ENCODE measurements at regions of chr1 and their contacts with region 1.

Region 1: DNA sequence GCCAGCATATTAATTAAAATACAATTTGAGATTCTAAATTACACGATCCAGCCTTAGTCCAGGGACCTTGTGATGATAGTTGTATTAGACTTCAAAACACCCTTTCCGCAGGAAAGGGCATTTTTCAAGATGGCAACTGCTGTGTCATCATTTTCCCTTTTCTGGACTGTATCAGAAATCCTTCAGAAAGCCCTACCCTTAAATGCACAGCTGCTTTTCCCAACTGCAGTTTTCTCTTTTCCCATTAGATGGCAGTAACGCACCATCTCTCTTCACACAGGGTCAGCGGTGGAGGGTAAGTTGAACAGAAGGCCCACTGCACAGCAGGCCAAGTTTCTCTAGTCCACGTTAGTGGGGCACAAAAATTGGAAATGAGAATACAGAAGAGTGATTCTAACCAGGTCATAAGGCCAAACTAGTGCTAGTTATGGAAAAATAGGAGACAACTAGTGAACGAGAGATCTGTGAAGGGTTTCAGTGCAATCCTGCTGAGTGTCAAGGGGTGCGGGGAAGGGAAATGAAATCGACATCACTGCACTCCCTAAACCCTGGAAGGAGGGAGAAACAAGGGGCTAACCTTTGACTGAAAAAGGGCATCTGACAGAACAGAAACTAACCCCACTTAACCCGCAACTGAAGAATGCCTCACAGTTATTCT is 22.1 kb upstream of the TDRD10 start:
- DNase-seq: peak; percentile 62 to 88 (median 72)
- H3K4me3 ChIP-seq: no peak overlapping the region
- H3K27ac ChIP-seq: peak overlapping the region in 2 of 5 donors; percentile 8 to 18
- H3K4me1 ChIP-seq: peaks cover 8 to 10% of the 10 kb centered on the region in 2 donors
- H3K27me3 ChIP-seq: no peaks in the 10 kb centered on the region
- CTCF ChIP-seq: peak; percentile 92 to 99 (median 98)
- POLR2A ChIP-seq: peak in 1 of 2 donors; percentile 22

Region 2: DNA sequence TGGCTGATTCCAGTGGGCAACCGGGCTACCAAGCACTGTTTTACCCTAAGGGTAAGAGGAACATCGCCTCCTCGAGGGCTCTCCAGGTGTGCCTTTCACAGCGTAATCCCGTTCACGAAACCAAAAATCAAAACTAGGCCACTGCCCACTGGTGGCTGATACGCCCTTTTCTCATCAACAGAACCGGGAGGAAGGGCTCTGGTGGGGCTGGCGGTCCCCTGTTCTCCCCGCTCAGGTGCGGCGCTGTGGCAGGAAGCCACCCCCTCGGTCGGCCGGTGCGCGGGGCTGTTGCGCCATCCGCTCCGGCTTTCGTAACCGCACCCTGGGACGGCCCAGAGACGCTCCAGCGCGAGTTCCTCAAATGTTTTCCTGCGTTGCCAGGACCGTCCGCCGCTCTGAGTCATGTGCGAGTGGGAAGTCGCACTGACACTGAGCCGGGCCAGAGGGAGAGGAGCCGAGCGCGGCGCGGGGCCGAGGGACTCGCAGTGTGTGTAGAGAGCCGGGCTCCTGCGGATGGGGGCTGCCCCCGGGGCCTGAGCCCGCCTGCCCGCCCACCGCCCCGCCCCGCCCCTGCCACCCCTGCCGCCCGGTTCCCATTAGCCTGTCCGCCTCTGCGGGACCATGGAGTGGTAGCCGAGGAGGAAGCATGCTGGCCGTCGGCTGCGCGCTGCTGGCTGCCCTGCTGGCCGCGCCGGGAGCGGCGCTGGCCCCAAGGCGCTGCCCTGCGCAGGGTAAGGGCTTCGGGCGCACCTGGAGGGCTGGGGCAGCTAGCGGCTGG is 74.7 kb before region 1 on chr1 and contains the start of gene IL6R:
- intact Hi-C with region 1: loop called in 1 of 2 experiments (anchors 10 kb)
- DNase-seq: peak; percentile 93 to 98 (median 96)
- H3K4me3 ChIP-seq: peak within 1 kb of the TSS; percentile 21 to 80 (median 68)
- H3K27ac ChIP-seq: peak within 1 kb of the TSS; percentile 92 to 99 (median 95)
- H3K4me1 ChIP-seq: peaks cover 24 to 38% of the 10 kb centered on the region in 2 donors
- H3K27me3 ChIP-seq: no peaks in the 10 kb centered on the region
- CTCF ChIP-seq: peak; percentile 12 to 49 (median 44)
- POLR2A ChIP-seq: peak; percentile 89 to 97
- total RNA-seq, gene IL6R: 6.5 to 43.0 (median 23.2) TPM

Region 3: GRCh38 chr1:154546264-154547063 is 66.6 kb after region 1 on chr1:
- intact Hi-C with region 1: loop called (anchors 2 to 5 kb)
- DNase-seq: peak; percentile 63 to 82 (median 73)
- H3K4me3 ChIP-seq: no peak overlapping the region
- H3K27ac ChIP-seq: peak overlapping the region in 1 of 5 donors; percentile 50
- H3K4me1 ChIP-seq: peaks cover 8 to 19% of the 10 kb centered on the region in 2 donors
- H3K27me3 ChIP-seq: no peaks in the 10 kb centered on the region
- CTCF ChIP-seq: peak; percentile 77 to 87 (median 82)
- POLR2A ChIP-seq: no peak

Region 4: GRCh38 chr1:154870115-154870571 is 390.2 kb after region 1 on chr1 and contains the start of gene KCNN3:
- intact Hi-C with region 1: loop called in 1 of 2 experiments (anchors 10 kb)
- DNase-seq: peak; percentile 90 to 97 (median 93)
- H3K4me3 ChIP-seq: peak within 1 kb of the TSS in 1 of 4 donors; percentile 43
- H3K27ac ChIP-seq: peak within 1 kb of the TSS in 1 of 5 donors; percentile 26
- H3K4me1 ChIP-seq: peaks cover 0 to 11% of the 10 kb centered on the region in 2 donors
- H3K27me3 ChIP-seq: no peaks in the 10 kb centered on the region
- CTCF ChIP-seq: no peak
- POLR2A ChIP-seq: peak; percentile 56 to 67
- total RNA-seq, gene KCNN3: 0.17 to 2.3 (median 1.1) TPM